Calu3 (cell line): ENCODE measurements at regions of chr6 and their contacts with region 1.

Region 1: GRCh38 chr6:46090115-46091079 is 39.4 kb upstream of the ENPP4 start:
- DNase-seq: peak; percentile 62
- H3K4me3 Mint-ChIP-seq: no peak overlapping the region
- H3K27ac Mint-ChIP-seq: no peak overlapping the region
- H3K4me1 Mint-ChIP-seq: no peaks in the 10 kb centered on the region
- H3K27me3 Mint-ChIP-seq: peaks cover 24% of the 10 kb centered on the region
- CTCF ChIP-seq: peak; percentile 63

Region 2: DNA sequence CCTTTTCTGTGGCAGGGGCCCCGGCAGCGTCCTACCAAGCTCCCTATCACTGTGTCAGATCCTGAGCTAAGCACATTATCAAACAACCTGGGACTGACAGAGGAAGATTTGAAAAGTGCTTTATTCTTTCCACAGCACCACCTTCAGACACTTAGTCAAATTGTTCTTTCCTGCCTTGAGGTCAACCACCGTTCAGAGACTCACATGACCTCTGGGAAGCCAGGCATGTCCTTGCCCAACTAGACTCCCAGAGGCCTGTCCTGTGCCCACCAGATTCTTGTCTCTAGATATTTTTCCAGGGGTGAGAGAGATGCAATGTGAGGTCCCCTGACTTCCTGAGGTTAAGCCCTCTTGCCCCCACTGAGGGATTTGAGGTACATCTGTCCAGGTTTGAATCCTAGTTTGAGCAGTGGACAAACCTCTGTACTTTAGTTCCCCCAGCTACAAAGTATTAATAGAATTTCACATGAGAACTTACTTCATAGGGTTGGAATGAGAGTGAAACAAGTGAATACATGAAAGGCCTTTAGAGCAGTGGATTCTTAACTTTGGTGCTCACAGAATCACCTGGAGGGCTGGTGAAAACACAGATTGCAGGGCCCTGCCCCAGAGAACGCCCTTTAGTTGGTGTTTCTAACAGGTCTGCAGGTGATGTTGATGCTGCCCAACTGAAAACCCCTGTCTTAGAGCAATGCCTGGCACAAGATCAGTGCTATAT is 254.5 kb before region 1 on chr6:
- CTCF ChIA-PET with region 1: no interaction called
- intact Hi-C with region 1: no loop called
- DNase-seq: no peak
- H3K4me3 Mint-ChIP-seq: no peak overlapping the region
- H3K27ac Mint-ChIP-seq: no peak overlapping the region
- H3K4me1 Mint-ChIP-seq: no peaks in the 10 kb centered on the region
- H3K27me3 Mint-ChIP-seq: peaks cover 54% of the 10 kb centered on the region
- CTCF ChIP-seq: no peak

Region 3: DNA sequence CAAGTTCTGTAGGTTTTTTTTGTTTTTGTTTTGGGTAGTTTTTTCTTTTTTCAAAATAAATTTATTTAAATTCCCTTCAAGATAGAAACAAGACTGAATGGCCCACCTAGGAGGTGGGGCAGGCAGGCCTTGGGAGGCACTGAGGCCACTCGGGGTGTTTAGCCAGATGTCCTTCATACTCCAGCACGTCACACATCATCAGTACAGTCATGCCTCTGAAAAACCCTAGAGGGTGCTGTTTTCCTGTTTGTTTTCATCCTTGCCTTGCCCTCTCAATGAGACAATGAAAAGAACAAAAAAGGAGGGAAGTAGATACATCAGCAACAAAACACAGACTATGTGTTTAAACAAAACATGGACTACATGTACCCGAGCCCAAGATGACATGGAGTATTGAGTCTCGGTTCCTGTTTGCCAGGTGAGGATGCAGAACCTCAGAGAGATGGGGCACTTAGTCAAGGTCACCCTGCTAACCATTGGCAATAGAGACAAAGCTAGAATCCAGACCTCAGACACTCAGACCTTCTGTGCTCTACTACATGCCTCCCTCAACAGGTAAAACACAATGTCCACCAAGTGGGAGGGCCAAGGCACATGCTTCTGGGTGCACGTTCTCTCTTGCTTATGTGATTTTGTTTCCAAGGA is 47.9 kb before region 1 on chr6:
- CTCF ChIA-PET with region 1: interaction called, 4 read pairs
- intact Hi-C with region 1: loop called (anchors 5 kb)
- DNase-seq: peak; percentile 44
- H3K4me3 Mint-ChIP-seq: no peak overlapping the region
- H3K27ac Mint-ChIP-seq: no peak overlapping the region
- H3K4me1 Mint-ChIP-seq: peaks cover 8% of the 10 kb centered on the region
- H3K27me3 Mint-ChIP-seq: no peaks in the 10 kb centered on the region
- CTCF ChIP-seq: peak; percentile 41

Region 4: GRCh38 chr6:46129629-46130511 is 39.5 kb after region 1 on chr6 and contains the start of gene ENPP4:
- CTCF ChIA-PET with region 1: interaction called, 11 read pairs
- intact Hi-C with region 1: loop called (anchors 2 kb)
- DNase-seq: peak; percentile 91
- H3K4me3 Mint-ChIP-seq: peak within 1 kb of the TSS; percentile 88
- H3K27ac Mint-ChIP-seq: peak within 1 kb of the TSS; percentile 58
- H3K4me1 Mint-ChIP-seq: peaks cover 9% of the 10 kb centered on the region
- H3K27me3 Mint-ChIP-seq: no peaks in the 10 kb centered on the region
- CTCF ChIP-seq: no peak
- total RNA-seq, gene ENPP4: 16.7 and 17.2 TPM in 2 replicates

Region 5: DNA sequence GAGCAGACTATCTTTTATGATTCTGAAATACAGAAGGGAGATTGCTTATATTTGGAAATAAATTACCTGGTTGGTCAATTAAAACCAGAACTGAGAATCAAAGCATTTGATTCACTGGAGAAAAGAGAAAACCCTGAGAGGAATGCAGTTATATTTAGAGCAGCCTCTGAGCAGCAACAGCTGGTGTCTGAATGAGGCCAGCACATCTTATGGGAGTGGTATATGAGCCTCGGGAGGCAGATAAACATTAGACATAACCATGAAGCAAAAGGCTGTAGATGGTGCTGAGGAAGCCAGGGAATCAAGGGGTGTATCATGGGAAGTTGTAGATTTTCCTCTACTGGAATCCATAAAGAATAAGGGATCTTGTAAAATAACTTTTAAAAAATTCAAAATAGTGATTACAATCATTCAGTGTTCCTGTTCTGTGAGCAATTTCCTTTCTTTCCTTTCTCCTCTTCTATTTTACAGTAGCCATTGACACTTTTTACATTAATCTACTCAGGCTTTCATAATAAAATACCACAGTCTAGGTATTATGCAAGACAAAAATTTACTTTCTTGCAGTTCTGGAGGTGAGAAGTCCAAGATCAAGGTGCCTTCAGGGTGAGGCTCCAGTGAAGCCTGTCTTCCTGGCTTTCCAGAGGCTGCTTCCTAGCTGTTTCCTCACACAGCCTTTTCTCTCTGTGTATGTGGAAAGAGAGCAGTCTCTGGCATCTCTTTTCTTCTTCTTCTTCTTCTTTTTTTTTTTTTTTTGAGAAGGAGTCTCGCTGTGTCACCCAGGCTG is 113.2 kb after region 1 on chr6:
- CTCF ChIA-PET with region 1: interaction called, 4 read pairs
- intact Hi-C with region 1: loop called (anchors 5 kb)
- DNase-seq: no peak
- H3K4me3 Mint-ChIP-seq: no peak overlapping the region
- H3K27ac Mint-ChIP-seq: no peak overlapping the region
- H3K4me1 Mint-ChIP-seq: no peaks in the 10 kb centered on the region
- H3K27me3 Mint-ChIP-seq: peaks cover 72% of the 10 kb centered on the region
- CTCF ChIP-seq: no peak

Region 6: DNA sequence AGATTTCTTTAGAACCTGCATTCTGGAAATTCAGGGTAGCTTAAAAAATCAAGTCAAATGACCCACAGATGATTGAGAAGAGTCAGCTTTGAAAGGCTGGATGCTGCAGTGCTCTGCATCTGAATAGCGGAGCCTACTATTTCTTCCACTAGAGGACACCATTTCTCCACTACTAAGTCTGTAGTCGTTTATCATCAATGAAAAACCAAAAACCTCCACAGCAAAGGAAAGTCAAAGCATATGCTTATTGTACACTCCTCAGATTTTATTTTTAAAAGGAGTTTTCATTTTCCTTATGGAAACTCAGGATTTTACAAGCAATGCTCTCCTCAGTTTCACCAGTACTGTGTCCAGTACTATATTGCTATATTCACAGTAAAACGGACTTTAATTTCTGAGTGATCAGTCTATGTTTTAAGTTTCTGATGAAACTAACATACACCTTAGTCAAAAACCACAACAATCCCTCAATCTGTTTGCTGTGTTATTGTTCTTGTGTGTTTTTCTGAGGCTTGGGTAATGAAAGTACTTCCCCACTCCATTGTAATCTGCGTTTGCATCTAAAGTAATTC is 130.9 kb after region 1 on chr6:
- CTCF ChIA-PET with region 1: interaction called, 8 read pairs
- intact Hi-C with region 1: loop called (anchors 2 kb)
- DNase-seq: peak; percentile 9
- H3K4me3 Mint-ChIP-seq: no peak overlapping the region
- H3K27ac Mint-ChIP-seq: no peak overlapping the region
- H3K4me1 Mint-ChIP-seq: no peaks in the 10 kb centered on the region
- H3K27me3 Mint-ChIP-seq: peaks cover 20% of the 10 kb centered on the region
- CTCF ChIP-seq: peak; percentile 60

Region 7: GRCh38 chr6:46410334-46410953 is 320.0 kb after region 1 on chr6:
- CTCF ChIA-PET with region 1: interaction called, 14 read pairs
- intact Hi-C with region 1: loop called (anchors 1 kb)
- DNase-seq: peak; percentile 34
- H3K4me3 Mint-ChIP-seq: no peak overlapping the region
- H3K27ac Mint-ChIP-seq: no peak overlapping the region
- H3K4me1 Mint-ChIP-seq: no peaks in the 10 kb centered on the region
- H3K27me3 Mint-ChIP-seq: no peaks in the 10 kb centered on the region
- CTCF ChIP-seq: peak; percentile 52

Region 8: GRCh38 chr6:46626228-46626909 is 536.0 kb after region 1 on chr6:
- CTCF ChIA-PET with region 1: no interaction called
- intact Hi-C with region 1: loop called (anchors 5 kb)
- DNase-seq: peak; percentile 16
- H3K4me3 Mint-ChIP-seq: no peak overlapping the region
- H3K27ac Mint-ChIP-seq: no peak overlapping the region
- H3K4me1 Mint-ChIP-seq: no peaks in the 10 kb centered on the region
- H3K27me3 Mint-ChIP-seq: no peaks in the 10 kb centered on the region
- CTCF ChIP-seq: peak; percentile 36